ENCODE measurements at regions of chr13 and their contacts with region 1.

Region 1: DNA sequence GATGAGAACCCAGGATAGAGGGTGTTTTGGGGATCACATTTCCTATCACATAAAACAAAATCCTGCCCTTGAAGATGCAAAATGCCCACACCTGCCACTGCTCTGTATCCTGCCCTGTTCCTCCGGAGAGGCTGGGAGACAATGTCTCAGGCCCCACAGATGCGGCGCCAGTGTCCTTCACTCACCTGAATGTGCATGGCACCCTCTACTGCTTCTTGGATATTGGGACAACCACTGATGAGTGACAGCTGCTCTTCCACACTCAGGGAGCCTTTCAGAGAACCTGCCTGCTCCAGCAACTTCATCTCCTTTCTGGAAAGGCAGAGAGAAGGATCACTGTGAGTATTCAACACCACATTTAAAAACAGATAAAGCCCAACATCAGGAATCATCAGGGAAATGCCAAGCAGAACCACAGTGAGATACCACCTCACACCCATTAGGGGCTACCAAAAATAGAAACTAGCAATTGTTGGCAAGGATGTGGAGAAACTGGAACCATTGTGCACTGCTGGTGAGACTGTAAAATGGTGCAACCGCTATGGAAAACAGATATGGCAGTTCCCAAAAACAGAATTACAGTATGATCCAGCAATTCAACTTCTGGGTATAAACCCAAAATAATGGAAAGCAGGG is 36.4 kb downstream of the CRYL1 start:
- DNase-seq: peak; percentile 74 to 81
- H3K4me3 ChIP-seq: no peak overlapping the region
- H3K4me3 Mint-ChIP-seq: no peak overlapping the region
- H3K27ac Mint-ChIP-seq: no peak overlapping the region
- H3K4me1 ChIP-seq: no peaks in the 10 kb centered on the region
- H3K4me1 Mint-ChIP-seq: no peaks in the 10 kb centered on the region
- H3K27me3 ChIP-seq: no peaks in the 10 kb centered on the region
- H3K27me3 Mint-ChIP-seq: no peaks in the 10 kb centered on the region
- CTCF ChIP-seq: peak; percentile 73 to 86

Region 2: GRCh38 chr13:20101484-20102316 is 387.6 kb before region 1 on chr13:
- CTCF ChIA-PET with region 1: no interaction called
- POLR2A ChIA-PET with region 1: no interaction called
- intact Hi-C with region 1: loop called (anchors 10 kb)
- DNase-seq: no peak
- H3K4me3 ChIP-seq: no peak overlapping the region
- H3K4me3 Mint-ChIP-seq: no peak overlapping the region
- H3K27ac Mint-ChIP-seq: no peak overlapping the region
- H3K4me1 ChIP-seq: no peaks in the 10 kb centered on the region
- H3K4me1 Mint-ChIP-seq: no peaks in the 10 kb centered on the region
- H3K27me3 ChIP-seq: no peaks in the 10 kb centered on the region
- H3K27me3 Mint-ChIP-seq: peaks cover 8% of the 10 kb centered on the region
- CTCF ChIP-seq: no peak

Region 3: GRCh38 chr13:20182231-20182846 is 307.0 kb before region 1 on chr13:
- CTCF ChIA-PET with region 1: no interaction called
- POLR2A ChIA-PET with region 1: no interaction called
- intact Hi-C with region 1: loop called (anchors 1 kb)
- DNase-seq: peak; percentile 64 to 77
- H3K4me3 ChIP-seq: no peak overlapping the region
- H3K4me3 Mint-ChIP-seq: no peak overlapping the region
- H3K27ac Mint-ChIP-seq: no peak overlapping the region
- H3K4me1 ChIP-seq: no peaks in the 10 kb centered on the region
- H3K4me1 Mint-ChIP-seq: no peaks in the 10 kb centered on the region
- H3K27me3 ChIP-seq: no peaks in the 10 kb centered on the region; the same call in 1 of the 2 replicates
- H3K27me3 Mint-ChIP-seq: peaks cover 7% of the 10 kb centered on the region
- CTCF ChIP-seq: peak; percentile 92 to 93

Region 4: GRCh38 chr13:20197361-20197834 is 291.9 kb before region 1 on chr13:
- CTCF ChIA-PET with region 1: interaction called, 12 read pairs
- POLR2A ChIA-PET with region 1: no interaction called
- intact Hi-C with region 1: loop called (anchors 1 kb)
- DNase-seq: peak in 1 of 2 experiments; percentile 17
- H3K4me3 ChIP-seq: no peak overlapping the region
- H3K4me3 Mint-ChIP-seq: no peak overlapping the region
- H3K27ac Mint-ChIP-seq: no peak overlapping the region
- H3K4me1 ChIP-seq: peaks cover 8% of the 10 kb centered on the region; the same call in 1 of the 2 replicates
- H3K4me1 Mint-ChIP-seq: no peaks in the 10 kb centered on the region
- H3K27me3 ChIP-seq: peaks cover 1% of the 10 kb centered on the region
- H3K27me3 Mint-ChIP-seq: peaks cover 35% of the 10 kb centered on the region
- CTCF ChIP-seq: peak; percentile 73 to 80

Measured in Caco-2 (cell line).